ENCODE measurements at regions of chr3 and their contacts with region 1.

Region 1: DNA sequence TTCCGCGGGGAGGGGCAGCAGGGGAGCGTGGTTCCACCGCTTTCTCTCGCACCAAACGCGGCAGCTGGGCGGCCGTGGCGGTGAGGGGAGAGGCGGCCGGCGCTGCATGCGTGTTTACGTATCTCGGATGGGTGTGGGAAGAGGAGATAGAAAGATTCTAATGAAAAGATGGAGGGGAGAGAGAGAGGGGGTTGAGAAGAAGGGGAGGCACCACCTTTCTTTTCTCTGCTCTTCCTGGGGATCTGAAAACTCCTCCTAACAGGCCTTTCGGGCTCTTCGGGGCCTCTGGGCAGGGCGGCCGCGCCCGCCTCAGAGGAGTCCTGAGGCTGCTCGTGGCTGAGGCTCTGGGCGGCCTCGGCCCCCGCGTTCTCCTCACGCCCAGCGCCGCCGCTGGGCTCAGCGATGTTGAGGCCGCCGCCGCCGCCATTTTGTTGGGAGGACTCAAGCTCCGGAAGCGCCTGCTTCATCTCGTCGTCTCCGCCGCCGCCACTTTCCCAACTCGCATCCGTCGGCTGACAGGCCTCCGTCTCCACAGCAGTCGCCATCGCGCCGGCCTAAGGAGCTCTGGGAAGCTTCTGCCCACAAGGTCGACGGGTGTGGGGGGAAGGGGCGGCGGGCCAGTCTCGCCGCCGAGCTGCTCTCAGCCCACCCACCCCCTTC is 473 bp downstream of the TASOR start:
- DNase-seq: peak; percentile 70 to 84 (median 79)
- ATAC-seq: peak; percentile 81
- H3K4me3 ChIP-seq: peak overlapping the region; percentile 93
- H3K4me3 Mint-ChIP-seq: peak overlapping the region; percentile 88 to 100 (median 94)
- H3K27ac ChIP-seq: peak overlapping the region; percentile 92
- H3K27ac Mint-ChIP-seq: peak overlapping the region; percentile 90 to 100 (median 94)
- H3K4me1 ChIP-seq: peaks cover 33 to 34% of the 10 kb centered on the region in 2 donors
- H3K4me1 Mint-ChIP-seq: peaks cover 28 to 55% (median 48%) of the 10 kb centered on the region in 7 donors
- H3K27me3 ChIP-seq: no peaks in the 10 kb centered on the region
- H3K27me3 Mint-ChIP-seq: no peaks in the 10 kb centered on the region

Region 2: DNA sequence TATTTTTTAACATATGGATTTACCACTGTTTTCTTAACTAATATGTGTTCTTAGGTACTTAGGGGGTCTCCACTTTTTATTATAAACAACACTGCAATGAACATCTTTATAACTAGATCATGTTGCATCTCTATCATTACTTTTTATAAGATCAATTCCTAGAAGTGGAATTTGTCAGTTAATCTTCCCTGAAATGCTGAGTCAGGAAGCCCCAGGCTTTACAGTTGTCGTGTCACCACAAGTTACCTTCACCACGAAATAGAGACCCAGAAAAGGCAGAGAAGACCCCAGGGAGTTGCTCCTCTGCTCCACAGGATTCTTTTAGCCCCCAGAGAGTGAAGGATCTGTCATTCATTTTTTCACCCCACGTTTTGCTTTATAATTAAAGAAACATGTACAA is 179.9 kb before region 1 on chr3:
- CTCF ChIA-PET with region 1: no interaction called
- POLR2A ChIA-PET with region 1: no interaction called
- intact Hi-C with region 1: no loop called
- DNase-seq: no peak
- ATAC-seq: no peak
- H3K4me3 ChIP-seq: no peak overlapping the region
- H3K4me3 Mint-ChIP-seq: no peak overlapping the region
- H3K27ac ChIP-seq: no peak overlapping the region
- H3K27ac Mint-ChIP-seq: no peak overlapping the region
- H3K4me1 ChIP-seq: no peaks in the 10 kb centered on the region
- H3K4me1 Mint-ChIP-seq: no peaks in the 10 kb centered on the region
- H3K27me3 ChIP-seq: no peaks in the 10 kb centered on the region
- H3K27me3 Mint-ChIP-seq: peaks cover 15 to 28% (median 25%) of the 10 kb centered on the region in 5 donors

Region 3: GRCh38 chr3:56556908-56557830 is 125.4 kb before region 1 on chr3 and contains the start of gene CCDC66:
- CTCF ChIA-PET with region 1: no interaction called
- POLR2A ChIA-PET with region 1: interaction called, 40 read pairs
- intact Hi-C with region 1: loop called (anchors 1 kb)
- DNase-seq: peak; percentile 85 to 95 (median 93)
- ATAC-seq: peak; percentile 96
- H3K4me3 ChIP-seq: peak within 1 kb of the TSS; percentile 96
- H3K4me3 Mint-ChIP-seq: peak within 1 kb of the TSS; percentile 91 to 100 (median 98)
- H3K27ac ChIP-seq: peak within 1 kb of the TSS; percentile 99
- H3K27ac Mint-ChIP-seq: peak within 1 kb of the TSS; percentile 93 to 100 (median 98)
- H3K4me1 ChIP-seq: peaks cover 9 to 17% of the 10 kb centered on the region in 2 donors
- H3K4me1 Mint-ChIP-seq: peaks cover 12 to 51% (median 38%) of the 10 kb centered on the region in 7 donors
- H3K27me3 ChIP-seq: no peaks in the 10 kb centered on the region
- H3K27me3 Mint-ChIP-seq: peaks cover 0 to 25% (median 0%) of the 10 kb centered on the region in 5 donors
- total RNA-seq, gene CCDC66: 38.6 to 115 (median 77.3) TPM

Region 4: GRCh38 chr3:56655709-56656108 is 26.9 kb before region 1 on chr3:
- CTCF ChIA-PET with region 1: no interaction called
- POLR2A ChIA-PET with region 1: no interaction called
- intact Hi-C with region 1: loop called in 1 of 2 experiments (anchors 2 kb)
- DNase-seq: no peak
- ATAC-seq: no peak
- H3K4me3 ChIP-seq: no peak overlapping the region
- H3K4me3 Mint-ChIP-seq: no peak overlapping the region
- H3K27ac ChIP-seq: no peak overlapping the region
- H3K27ac Mint-ChIP-seq: peak overlapping the region in 4 of 9 donors; percentile 6 to 36 (median 28)
- H3K4me1 ChIP-seq: no peaks in the 10 kb centered on the region
- H3K4me1 Mint-ChIP-seq: peaks cover 20 to 54% (median 42%) of the 10 kb centered on the region in 7 donors
- H3K27me3 ChIP-seq: no peaks in the 10 kb centered on the region
- H3K27me3 Mint-ChIP-seq: no peaks in the 10 kb centered on the region

Region 5: DNA sequence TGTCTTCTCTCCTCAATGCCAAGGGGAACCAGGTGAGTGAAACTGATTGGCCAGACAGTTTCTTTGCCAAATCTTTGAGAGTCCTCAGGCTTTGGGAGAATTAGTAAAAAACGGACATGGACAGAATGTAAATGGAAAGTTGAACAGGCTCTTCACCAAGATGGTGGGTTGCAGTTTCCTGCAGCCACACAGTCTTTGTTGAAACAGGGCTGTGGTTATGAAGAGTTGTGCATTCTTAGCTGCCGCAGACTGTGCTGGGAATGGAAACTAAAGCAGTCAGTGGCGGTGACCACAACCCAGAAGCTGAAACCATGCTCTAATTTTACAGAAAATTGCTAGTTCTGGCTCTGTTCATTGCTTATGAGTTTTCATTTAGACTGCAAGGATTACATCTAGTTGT is 42.6 kb after region 1 on chr3:
- CTCF ChIA-PET with region 1: no interaction called
- POLR2A ChIA-PET with region 1: interaction called, 5 read pairs
- intact Hi-C with region 1: loop called in 1 of 2 experiments (anchors 5 kb)
- DNase-seq: peak in 7 of 9 donors; percentile 27 to 61 (median 44)
- ATAC-seq: peak; percentile 88
- H3K4me3 ChIP-seq: no peak overlapping the region
- H3K4me3 Mint-ChIP-seq: peak overlapping the region; percentile 55 to 87 (median 72)
- H3K27ac ChIP-seq: peak overlapping the region; percentile 51
- H3K27ac Mint-ChIP-seq: peak overlapping the region; percentile 63 to 98 (median 90)
- H3K4me1 ChIP-seq: peaks cover 20 to 31% of the 10 kb centered on the region in 2 donors
- H3K4me1 Mint-ChIP-seq: peaks cover 12 to 70% (median 51%) of the 10 kb centered on the region in 7 donors
- H3K27me3 ChIP-seq: no peaks in the 10 kb centered on the region
- H3K27me3 Mint-ChIP-seq: no peaks in the 10 kb centered on the region

Region 6: GRCh38 chr3:56890448-56891091 is 208.0 kb after region 1 on chr3:
- CTCF ChIA-PET with region 1: no interaction called
- POLR2A ChIA-PET with region 1: no interaction called
- intact Hi-C with region 1: no loop called
- DNase-seq: peak in 7 of 9 donors; percentile 38 to 65 (median 52)
- ATAC-seq: peak; percentile 51
- H3K4me3 ChIP-seq: peak overlapping the region; percentile 4
- H3K4me3 Mint-ChIP-seq: peak overlapping the region in 9 of 10 donors; percentile 56 to 88 (median 72)
- H3K27ac ChIP-seq: no peak overlapping the region
- H3K27ac Mint-ChIP-seq: peak overlapping the region in 8 of 9 donors; percentile 46 to 91 (median 67)
- H3K4me1 ChIP-seq: peaks cover 48 to 76% of the 10 kb centered on the region in 2 donors
- H3K4me1 Mint-ChIP-seq: peaks cover 54 to 94% (median 87%) of the 10 kb centered on the region in 7 donors
- H3K27me3 ChIP-seq: no peaks in the 10 kb centered on the region
- H3K27me3 Mint-ChIP-seq: no peaks in the 10 kb centered on the region

Region 7: GRCh38 chr3:57597122-57597923 is 914.7 kb after region 1 on chr3 and contains the start of gene ARF4:
- CTCF ChIA-PET with region 1: no interaction called
- POLR2A ChIA-PET with region 1: no interaction called
- intact Hi-C with region 1: loop called (anchors 1 kb)
- DNase-seq: peak; percentile 99 to 100 (median 100)
- ATAC-seq: peak; percentile 93
- H3K4me3 ChIP-seq: peak within 1 kb of the TSS; percentile 86
- H3K4me3 Mint-ChIP-seq: peak within 1 kb of the TSS; percentile 91 to 99 (median 98)
- H3K27ac ChIP-seq: peak within 1 kb of the TSS; percentile 94
- H3K27ac Mint-ChIP-seq: peak within 1 kb of the TSS; percentile 95 to 100 (median 99)
- H3K4me1 ChIP-seq: peaks cover 29 to 30% of the 10 kb centered on the region in 2 donors
- H3K4me1 Mint-ChIP-seq: peaks cover 33 to 64% (median 51%) of the 10 kb centered on the region in 7 donors
- H3K27me3 ChIP-seq: no peaks in the 10 kb centered on the region
- H3K27me3 Mint-ChIP-seq: no peaks in the 10 kb centered on the region
- total RNA-seq, gene ARF4: 50.9 to 85.5 (median 57.5) TPM